ENCODE measurements at regions of chrX and their contacts with region 1.

Region 1: GRCh38 chrX:118459494-118459893 is 36.1 kb upstream of the DOCK11 start:
- DNase-seq: peak in 7 of 9 donors; percentile 22 to 54 (median 35)
- ATAC-seq: peak; percentile 55
- H3K4me3 ChIP-seq: no peak overlapping the region
- H3K4me3 Mint-ChIP-seq: no peak overlapping the region
- H3K27ac ChIP-seq: no peak overlapping the region
- H3K27ac Mint-ChIP-seq: peak overlapping the region in 1 of 9 donors; percentile 76
- H3K4me1 ChIP-seq: no peaks in the 10 kb centered on the region
- H3K4me1 Mint-ChIP-seq: peaks cover 0 to 5% (median 0%) of the 10 kb centered on the region in 7 donors
- H3K27me3 ChIP-seq: no peaks in the 10 kb centered on the region
- H3K27me3 Mint-ChIP-seq: peaks cover 0 to 3% (median 0%) of the 10 kb centered on the region in 5 donors

Region 2: GRCh38 chrX:118536687-118537461 is 77.4 kb after region 1 on chrX:
- CTCF ChIA-PET with region 1: no interaction called
- POLR2A ChIA-PET with region 1: interaction called, 4 read pairs
- intact Hi-C with region 1: loop called in 1 of 2 experiments (anchors 1 kb)
- DNase-seq: peak in 7 of 9 donors; percentile 25 to 54 (median 49)
- ATAC-seq: peak; percentile 86
- H3K4me3 ChIP-seq: peak overlapping the region; percentile 31
- H3K4me3 Mint-ChIP-seq: peak overlapping the region; percentile 43 to 76 (median 60)
- H3K27ac ChIP-seq: peak overlapping the region; percentile 63
- H3K27ac Mint-ChIP-seq: peak overlapping the region; percentile 52 to 91 (median 79)
- H3K4me1 ChIP-seq: peaks cover 29 to 31% of the 10 kb centered on the region in 2 donors
- H3K4me1 Mint-ChIP-seq: peaks cover 23 to 79% (median 70%) of the 10 kb centered on the region in 7 donors
- H3K27me3 ChIP-seq: no peaks in the 10 kb centered on the region
- H3K27me3 Mint-ChIP-seq: no peaks in the 10 kb centered on the region

Region 3: GRCh38 chrX:118552121-118552900 is 92.8 kb after region 1 on chrX:
- CTCF ChIA-PET with region 1: interaction called, 3 read pairs
- POLR2A ChIA-PET with region 1: no interaction called
- intact Hi-C with region 1: loop called in 1 of 2 experiments (anchors 5 kb)
- DNase-seq: no peak
- ATAC-seq: peak; percentile 74
- H3K4me3 ChIP-seq: no peak overlapping the region
- H3K4me3 Mint-ChIP-seq: no peak overlapping the region
- H3K27ac ChIP-seq: no peak overlapping the region
- H3K27ac Mint-ChIP-seq: peak overlapping the region in 4 of 9 donors; percentile 21 to 67 (median 42)
- H3K4me1 ChIP-seq: no peaks in the 10 kb centered on the region
- H3K4me1 Mint-ChIP-seq: peaks cover 4 to 30% (median 11%) of the 10 kb centered on the region in 7 donors
- H3K27me3 ChIP-seq: no peaks in the 10 kb centered on the region
- H3K27me3 Mint-ChIP-seq: no peaks in the 10 kb centered on the region

Region 4: GRCh38 chrX:118603981-118604380 is 144.5 kb after region 1 on chrX:
- CTCF ChIA-PET with region 1: interaction called, 19 read pairs
- POLR2A ChIA-PET with region 1: no interaction called
- intact Hi-C with region 1: loop called (anchors 1 kb)
- DNase-seq: peak in 8 of 9 donors; percentile 2 to 40 (median 25)
- ATAC-seq: peak; percentile 77
- H3K4me3 ChIP-seq: no peak overlapping the region
- H3K4me3 Mint-ChIP-seq: peak overlapping the region in 6 of 10 donors; percentile 3 to 50 (median 39)
- H3K27ac ChIP-seq: no peak overlapping the region
- H3K27ac Mint-ChIP-seq: peak overlapping the region in 8 of 9 donors; percentile 33 to 91 (median 76)
- H3K4me1 ChIP-seq: no peaks in the 10 kb centered on the region
- H3K4me1 Mint-ChIP-seq: peaks cover 8 to 29% (median 20%) of the 10 kb centered on the region in 7 donors
- H3K27me3 ChIP-seq: no peaks in the 10 kb centered on the region
- H3K27me3 Mint-ChIP-seq: no peaks in the 10 kb centered on the region

Region 5: DNA sequence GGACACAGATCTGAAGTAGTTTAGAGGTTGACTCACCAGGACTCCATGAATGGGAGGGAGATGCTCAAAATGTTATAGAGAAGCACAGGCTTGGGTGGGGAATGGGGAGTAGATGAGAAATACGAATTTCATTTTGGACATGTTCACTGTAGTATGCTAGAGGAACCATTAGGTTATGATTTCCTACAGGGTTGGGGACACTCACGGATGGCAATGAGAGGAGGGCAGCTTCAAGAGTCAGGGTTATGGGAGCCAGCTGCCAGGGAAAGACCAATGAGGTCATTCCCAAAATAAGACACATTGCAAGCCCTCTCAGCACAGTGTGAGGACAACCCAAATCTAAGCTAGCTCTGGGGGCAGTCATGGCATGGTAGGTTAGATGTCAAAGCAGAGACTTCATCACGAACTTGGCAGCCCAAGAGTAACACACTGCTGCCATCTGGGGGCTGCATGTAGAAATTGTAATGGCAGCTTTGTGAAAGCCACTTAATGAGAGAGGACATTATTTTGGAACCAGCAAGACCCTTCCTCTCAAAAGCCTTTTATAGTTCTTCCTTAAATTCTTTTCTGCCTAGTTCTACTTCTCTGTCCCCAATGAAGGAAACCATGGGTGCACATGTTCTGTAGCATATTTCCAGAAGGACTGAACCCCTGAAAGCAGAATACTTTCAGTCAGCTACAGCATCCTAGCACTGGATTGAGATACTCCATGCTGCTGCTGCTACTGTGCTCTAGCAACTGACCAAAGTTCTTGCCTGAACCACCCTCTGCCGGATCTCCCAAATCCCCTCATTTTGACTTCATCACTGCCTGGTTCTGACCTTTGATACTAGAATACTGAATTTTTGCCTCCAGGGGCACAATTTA is 347.9 kb after region 1 on chrX:
- CTCF ChIA-PET with region 1: interaction called, 4 read pairs
- POLR2A ChIA-PET with region 1: no interaction called
- intact Hi-C with region 1: loop called (anchors 1 kb)
- DNase-seq: peak in 6 of 9 donors; percentile 9 to 37 (median 23)
- ATAC-seq: peak; percentile 72
- H3K4me3 ChIP-seq: no peak overlapping the region
- H3K4me3 Mint-ChIP-seq: no peak overlapping the region
- H3K27ac ChIP-seq: no peak overlapping the region
- H3K27ac Mint-ChIP-seq: no peak overlapping the region
- H3K4me1 ChIP-seq: no peaks in the 10 kb centered on the region
- H3K4me1 Mint-ChIP-seq: peaks cover 0 to 2% (median 0%) of the 10 kb centered on the region in 7 donors
- H3K27me3 ChIP-seq: no peaks in the 10 kb centered on the region
- H3K27me3 Mint-ChIP-seq: peaks cover 0 to 18% (median 9%) of the 10 kb centered on the region in 5 donors